ENCODE measurements at regions of chr17 and their contacts with region 1.

Region 1: GRCh38 chr17:37358830-37359681 is 16.7 kb upstream of the C17orf78 start:
- DNase-seq: peak; percentile 98 to 100
- H3K4me3 ChIP-seq: peak overlapping the region; percentile 84
- H3K4me3 Mint-ChIP-seq: peak overlapping the region; percentile 98
- H3K27ac Mint-ChIP-seq: peak overlapping the region; percentile 90
- H3K4me1 ChIP-seq: peaks cover 25% of the 10 kb centered on the region
- H3K4me1 Mint-ChIP-seq: peaks cover 22% of the 10 kb centered on the region
- H3K27me3 ChIP-seq: no peaks in the 10 kb centered on the region
- H3K27me3 Mint-ChIP-seq: no peaks in the 10 kb centered on the region
- CTCF ChIP-seq: peak; percentile 22 to 60

Region 2: DNA sequence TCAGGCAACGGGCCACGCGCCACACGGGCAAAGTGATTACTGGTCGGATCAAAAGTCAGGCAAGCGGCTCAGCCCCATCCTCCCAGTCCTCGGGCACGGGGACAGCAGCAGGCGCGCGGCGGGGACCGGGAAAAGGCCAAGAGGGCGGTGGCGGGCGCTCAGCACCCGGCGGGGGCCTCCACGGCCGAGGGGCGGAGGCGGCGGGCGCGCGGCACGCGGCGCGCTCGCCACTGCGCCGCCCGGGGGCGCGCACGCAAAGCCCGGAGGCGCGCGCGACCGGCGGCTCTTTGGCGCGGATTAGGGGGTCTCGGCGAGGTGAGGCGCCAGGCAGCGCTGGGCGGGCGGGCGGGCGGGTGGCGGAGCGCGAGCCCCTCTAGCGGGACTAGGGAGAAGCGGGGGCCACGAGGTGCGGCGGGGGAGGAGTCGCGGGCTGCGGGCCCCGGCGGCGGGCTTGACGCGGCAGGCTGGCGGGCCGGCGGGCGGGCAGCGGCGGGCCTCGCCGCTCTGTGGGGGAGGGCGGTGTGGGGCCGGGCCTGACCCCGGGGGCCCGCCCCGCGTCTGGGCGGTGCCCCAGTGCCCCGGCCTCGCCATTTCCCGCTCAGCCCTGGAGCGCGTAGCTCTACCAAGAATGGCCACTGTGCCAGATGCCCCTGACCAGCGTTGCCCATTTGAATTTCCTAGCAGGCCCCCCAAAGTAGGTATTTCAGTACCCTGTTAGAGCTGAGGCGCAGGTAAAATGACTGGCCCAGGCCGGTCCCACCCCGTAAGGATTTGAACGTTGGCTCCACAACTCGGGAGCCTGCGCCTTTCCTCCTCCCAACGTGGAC is 47.8 kb after region 1 on chr17 and contains the starts of genes ACACA and TADA2A:
- CTCF ChIA-PET with region 1: no interaction called
- POLR2A ChIA-PET with region 1: interaction called, 20 read pairs
- intact Hi-C with region 1: no loop called
- DNase-seq: peak; percentile 86 to 92
- H3K4me3 ChIP-seq: peak within 1 kb of the TSS; percentile 99
- H3K4me3 Mint-ChIP-seq: peak within 1 kb of the TSS; percentile 93
- H3K27ac Mint-ChIP-seq: peak within 1 kb of the TSS; percentile 87
- H3K4me1 ChIP-seq: peaks cover 14% of the 10 kb centered on the region; the same call in 1 of the 2 replicates
- H3K4me1 Mint-ChIP-seq: peaks cover 10% of the 10 kb centered on the region
- H3K27me3 ChIP-seq: no peaks in the 10 kb centered on the region
- H3K27me3 Mint-ChIP-seq: no peaks in the 10 kb centered on the region
- CTCF ChIP-seq: no peak
- total RNA-seq, gene ACACA: 108 and 113 TPM in 2 replicates
- total RNA-seq, gene TADA2A: 27.3 and 29.4 TPM in 2 replicates

Measured in Caco-2 (cell line).